WTC11 (cell line): ENCODE measurements at regions of chr16 and their contacts with region 1.

Region 1: DNA sequence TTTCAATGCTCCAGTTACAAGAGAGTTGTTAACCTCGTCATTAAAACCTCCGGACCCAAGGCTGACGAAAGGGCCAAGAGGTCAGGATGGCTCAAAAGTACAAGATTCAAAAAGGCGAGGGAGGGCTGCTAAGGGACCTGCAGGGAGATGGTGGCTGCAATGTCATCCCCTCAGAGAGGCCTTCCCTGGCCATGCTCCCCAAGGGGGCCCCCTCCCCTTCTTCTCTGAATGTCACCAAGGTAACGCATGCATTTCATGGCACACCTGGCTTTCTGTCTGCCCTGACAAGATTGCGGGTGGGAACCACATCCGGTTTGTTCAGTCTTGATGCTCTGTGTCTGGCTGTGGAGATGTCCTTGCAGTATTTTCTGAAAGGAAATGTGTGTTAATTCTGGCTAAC is 89.9 kb downstream of the C16orf78 start:
- DNase-seq: no peak
- ATAC-seq: no peak
- H3K4me3 Mint-ChIP-seq: no peak overlapping the region
- H3K27ac Mint-ChIP-seq: no peak overlapping the region
- H3K4me1 Mint-ChIP-seq: peaks cover 17% of the 10 kb centered on the region
- H3K27me3 Mint-ChIP-seq: peaks cover 18% of the 10 kb centered on the region
- CTCF ChIP-seq: no peak

Region 2: GRCh38 chr16:49446805-49447204 is 16.7 kb before region 1 on chr16:
- CTCF ChIA-PET with region 1: interaction called, 13 read pairs
- POLR2A ChIA-PET with region 1: no interaction called
- DNase-seq: no peak
- ATAC-seq: no peak
- H3K4me3 Mint-ChIP-seq: no peak overlapping the region
- H3K27ac Mint-ChIP-seq: no peak overlapping the region
- H3K4me1 Mint-ChIP-seq: peaks cover 38% of the 10 kb centered on the region
- H3K27me3 Mint-ChIP-seq: peaks cover 3% of the 10 kb centered on the region; the same call in 1 of the 2 replicates
- CTCF ChIP-seq: no peak

Region 3: DNA sequence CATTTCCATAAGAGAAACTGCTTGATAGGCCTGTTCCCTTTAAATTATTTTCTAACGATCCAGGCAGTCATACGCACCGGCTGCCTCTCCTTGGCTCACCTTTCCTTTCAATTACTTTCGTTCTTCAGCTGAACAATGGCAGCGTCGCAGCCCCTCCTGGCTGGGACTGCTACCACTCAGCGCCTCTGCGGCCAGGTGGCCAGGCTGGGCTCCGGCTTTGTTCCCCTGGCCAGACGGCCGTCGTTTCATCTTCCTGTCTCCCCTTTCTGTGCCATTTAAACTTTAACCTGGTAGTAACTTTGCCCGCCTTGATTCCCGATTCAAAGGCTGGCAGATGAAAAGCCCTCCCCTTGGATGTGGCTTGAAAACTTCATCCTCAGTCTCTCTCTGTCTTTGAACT is 11.0 kb before region 1 on chr16:
- CTCF ChIA-PET with region 1: interaction called, 13 read pairs
- POLR2A ChIA-PET with region 1: no interaction called
- DNase-seq: peak; percentile 39
- ATAC-seq: peak; percentile 85
- H3K4me3 Mint-ChIP-seq: peak overlapping the region; percentile 0; the same call in 1 of the 2 replicates
- H3K27ac Mint-ChIP-seq: 0 out of 2 replicates have a peak overlapping the region, but pooled peaks have one; percentile 6
- H3K4me1 Mint-ChIP-seq: peaks cover 17% of the 10 kb centered on the region
- H3K27me3 Mint-ChIP-seq: peaks cover 3% of the 10 kb centered on the region; the same call in 1 of the 2 replicates
- CTCF ChIP-seq: no peak

Region 4: GRCh38 chr16:49491771-49492761 is 28.5 kb after region 1 on chr16:
- CTCF ChIA-PET with region 1: interaction called, 12 read pairs
- POLR2A ChIA-PET with region 1: interaction called, 4 read pairs
- DNase-seq: peak; percentile 82
- ATAC-seq: peak; percentile 82
- H3K4me3 Mint-ChIP-seq: peak overlapping the region; percentile 49; the same call in 1 of the 2 replicates
- H3K27ac Mint-ChIP-seq: 0 out of 2 replicates have a peak overlapping the region, but pooled peaks have one; percentile 32
- H3K4me1 Mint-ChIP-seq: peaks cover 16% of the 10 kb centered on the region
- H3K27me3 Mint-ChIP-seq: no peaks in the 10 kb centered on the region
- CTCF ChIP-seq: peak; percentile 98

Region 5: DNA sequence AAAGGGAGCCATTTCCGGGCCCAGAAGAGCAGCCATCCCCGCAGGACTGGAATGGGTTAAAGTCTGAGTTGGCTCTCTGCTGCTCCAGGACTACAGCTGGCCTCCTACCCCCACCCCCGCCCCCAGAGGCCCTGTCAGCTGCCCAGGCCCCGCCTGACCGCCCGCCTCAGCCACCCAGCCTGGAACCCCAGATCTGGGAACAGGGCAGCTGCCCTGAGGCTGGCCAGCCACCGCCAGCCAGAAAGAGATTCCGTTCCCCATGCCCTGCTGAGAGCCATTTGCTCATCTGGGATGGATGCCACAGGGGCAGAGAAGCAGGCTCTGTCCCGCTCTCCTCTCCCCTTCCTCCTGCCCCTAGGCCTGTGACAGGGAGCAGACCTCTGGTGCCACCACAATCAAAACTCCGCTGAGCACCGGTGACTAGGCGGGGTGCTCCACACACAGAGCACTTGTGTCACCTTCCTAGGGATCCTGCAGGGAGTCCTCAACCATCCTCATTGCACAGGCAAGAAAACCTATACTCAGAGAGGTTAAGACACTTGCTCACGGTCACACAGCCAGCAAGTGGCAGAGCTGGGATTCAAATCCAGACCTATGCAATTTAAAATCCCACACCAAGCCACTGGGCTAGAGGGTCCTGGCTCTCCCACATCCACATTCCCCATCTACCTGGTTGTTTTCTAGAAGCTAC is 348.3 kb after region 1 on chr16:
- CTCF ChIA-PET with region 1: no interaction called
- POLR2A ChIA-PET with region 1: interaction called, 13 read pairs
- DNase-seq: no peak
- ATAC-seq: peak; percentile 50
- H3K4me3 Mint-ChIP-seq: no peak overlapping the region
- H3K27ac Mint-ChIP-seq: peak overlapping the region; percentile 84
- H3K4me1 Mint-ChIP-seq: peaks cover 46% of the 10 kb centered on the region
- H3K27me3 Mint-ChIP-seq: no peaks in the 10 kb centered on the region
- CTCF ChIP-seq: no peak